Thyroid gland (tissue), 4 donors: ENCODE measurements at regions of chr4 and their contacts with region 1.

Region 1: GRCh38 chr4:40719008-40719623 is 30.6 kb upstream of the NSUN7 start:
- DNase-seq: peak; percentile 26 to 30
- H3K4me3 ChIP-seq: no peak overlapping the region
- H3K27ac ChIP-seq: peak overlapping the region; percentile 75 to 82 (median 76)
- H3K4me1 ChIP-seq: peaks cover 13 to 17% of the 10 kb centered on the region in 2 donors
- H3K27me3 ChIP-seq: no peaks in the 10 kb centered on the region
- CTCF ChIP-seq: peak in 5 of 6 experiments; percentile 19 to 93 (median 78)
- POLR2A ChIP-seq: no peak

Region 2: GRCh38 chr4:40149960-40150385 is 569.1 kb before region 1 on chr4:
- intact Hi-C with region 1: loop called (anchors 10 kb)
- DNase-seq: peak; percentile 65 to 67
- H3K4me3 ChIP-seq: no peak overlapping the region
- H3K27ac ChIP-seq: no peak overlapping the region
- H3K4me1 ChIP-seq: no peaks in the 10 kb centered on the region
- H3K27me3 ChIP-seq: no peaks in the 10 kb centered on the region
- CTCF ChIP-seq: peak; percentile 71 to 91 (median 79)
- POLR2A ChIP-seq: no peak

Region 3: DNA sequence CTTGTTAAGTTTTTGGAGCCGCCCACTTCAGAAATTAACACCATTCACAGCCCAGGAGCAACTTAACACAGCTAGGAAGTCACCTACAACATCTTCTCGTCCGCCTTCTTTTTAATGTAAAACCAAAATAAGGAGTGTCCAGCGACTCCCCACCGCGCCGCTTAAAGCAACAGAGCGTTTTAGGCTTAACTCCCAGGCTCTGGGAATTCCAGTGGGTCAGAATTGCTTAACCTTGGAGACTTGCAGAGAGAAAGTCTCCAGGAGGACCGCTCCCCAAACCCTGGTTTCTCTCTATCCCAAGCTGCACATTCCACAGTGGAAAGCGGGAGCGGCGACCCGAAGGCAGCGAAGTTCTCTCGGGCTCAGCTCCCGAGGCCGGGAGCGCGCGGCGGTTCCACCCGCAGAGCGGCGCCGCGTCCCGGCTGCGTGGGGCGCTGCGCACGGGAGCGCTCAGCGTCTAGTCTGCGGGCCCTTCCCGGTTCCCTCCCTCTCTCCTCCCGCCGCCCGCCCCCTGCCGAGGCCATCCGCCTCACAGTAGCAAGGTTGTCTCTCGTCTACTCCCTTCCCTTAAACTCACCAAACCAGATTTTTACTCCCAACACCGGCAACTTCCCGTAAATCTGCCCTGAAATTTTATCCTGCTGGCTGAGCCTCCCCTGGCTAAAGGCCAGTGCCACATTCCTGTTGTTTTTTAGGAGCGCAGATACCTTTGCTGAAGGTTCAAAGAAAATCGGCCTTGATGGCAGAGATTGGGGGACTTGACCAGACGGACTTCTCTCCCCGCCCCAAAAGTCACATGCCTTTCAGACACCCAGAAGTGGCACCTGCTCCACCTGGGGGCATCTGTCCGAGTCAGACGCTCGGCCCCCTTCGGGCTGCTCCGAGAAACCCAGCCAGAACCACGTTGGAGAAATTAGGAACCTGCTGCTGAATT is 89.4 kb before region 1 on chr4 and contains the start of gene RBM47:
- intact Hi-C with region 1: no loop called
- DNase-seq: peak; percentile 87 to 88
- H3K4me3 ChIP-seq: peak within 1 kb of the TSS; percentile 59 to 83 (median 63)
- H3K27ac ChIP-seq: peak within 1 kb of the TSS; percentile 95 to 97 (median 97)
- H3K4me1 ChIP-seq: peaks cover 20 to 21% of the 10 kb centered on the region in 2 donors
- H3K27me3 ChIP-seq: no peaks in the 10 kb centered on the region
- CTCF ChIP-seq: no peak
- POLR2A ChIP-seq: peak; percentile 46 to 84
- total RNA-seq, gene RBM47: 200 to 369 (median 323) TPM